Mammary epithelial cell (primary cell): ENCODE measurements at regions of chr3 and their contacts with region 1.

Region 1: GRCh38 chr3:55485211-55485791 is 1.8 kb downstream of the WNT5A start:
- DNase-seq: peak; percentile 62
- H3K4me3 ChIP-seq: peak overlapping the region; percentile 55 to 86 (median 80)
- H3K27ac ChIP-seq: peak overlapping the region; percentile 23
- H3K4me1 ChIP-seq: peaks cover 38% of the 10 kb centered on the region
- H3K27me3 ChIP-seq: no peaks in the 10 kb centered on the region
- CTCF ChIP-seq: peak; percentile 48 to 73

Region 2: DNA sequence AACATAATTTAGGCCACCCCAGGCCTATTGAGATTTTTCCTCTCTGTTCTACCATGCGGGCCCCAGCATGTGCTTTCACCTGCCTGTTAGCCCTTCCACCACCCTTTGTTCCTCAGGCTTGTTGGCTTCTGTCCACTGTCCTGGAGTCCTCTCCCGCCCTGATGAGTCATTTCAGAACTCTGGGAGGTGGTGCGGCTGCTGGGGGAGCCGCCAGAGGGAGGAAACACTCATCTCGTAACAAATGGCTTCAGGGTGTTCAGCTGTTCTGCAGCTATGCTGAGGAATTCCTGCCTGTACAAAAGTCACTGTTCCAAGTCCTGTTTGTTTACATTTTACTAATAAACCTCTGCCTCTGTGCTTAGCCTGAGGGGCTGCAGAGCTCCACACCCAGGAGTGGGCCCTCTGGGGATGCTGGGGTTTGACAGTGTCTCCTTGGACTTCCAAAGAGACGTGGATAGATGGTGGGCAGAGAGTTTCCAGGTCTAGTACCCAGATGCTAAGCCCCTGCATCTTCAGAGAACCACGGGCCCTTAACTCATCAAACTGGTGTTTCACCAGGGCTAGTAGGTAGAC is 593.7 kb before region 1 on chr3:
- CTCF ChIA-PET with region 1: no interaction called
- dilution Hi-C with region 1: no loop called
- in situ Hi-C with region 1: loop called in 1 of 2 experiments (anchors 25 kb)
- intact Hi-C with region 1: no loop called
- DNase-seq: peak; percentile 97
- H3K4me3 ChIP-seq: no peak overlapping the region
- H3K27ac ChIP-seq: peak overlapping the region; percentile 33
- H3K4me1 ChIP-seq: peaks cover 25% of the 10 kb centered on the region
- H3K27me3 ChIP-seq: no peaks in the 10 kb centered on the region
- CTCF ChIP-seq: peak; percentile 49 to 57

Region 3: GRCh38 chr3:55524565-55525244 is 39.4 kb after region 1 on chr3:
- CTCF ChIA-PET with region 1: no interaction called
- dilution Hi-C with region 1: no loop called
- in situ Hi-C with region 1: no loop called
- intact Hi-C with region 1: loop called (anchors 2 kb)
- DNase-seq: peak; percentile 80
- H3K4me3 ChIP-seq: no peak overlapping the region
- H3K27ac ChIP-seq: peak overlapping the region; percentile 1
- H3K4me1 ChIP-seq: peaks cover 29% of the 10 kb centered on the region
- H3K27me3 ChIP-seq: no peaks in the 10 kb centered on the region
- CTCF ChIP-seq: no peak

Region 4: GRCh38 chr3:55746808-55747413 is 261.6 kb after region 1 on chr3:
- CTCF ChIA-PET with region 1: no interaction called
- dilution Hi-C with region 1: loop called (anchors 25 kb)
- in situ Hi-C with region 1: no loop called
- intact Hi-C with region 1: no loop called
- DNase-seq: no peak
- H3K4me3 ChIP-seq: no peak overlapping the region
- H3K27ac ChIP-seq: no peak overlapping the region
- H3K4me1 ChIP-seq: peaks cover 11% of the 10 kb centered on the region
- H3K27me3 ChIP-seq: no peaks in the 10 kb centered on the region
- CTCF ChIP-seq: peak; percentile 35 to 50

Region 5: GRCh38 chr3:56042326-56042951 is 557.1 kb after region 1 on chr3:
- CTCF ChIA-PET with region 1: no interaction called
- dilution Hi-C with region 1: no loop called
- in situ Hi-C with region 1: no loop called
- intact Hi-C with region 1: loop called (anchors 2 kb)
- DNase-seq: peak; percentile 16
- H3K4me3 ChIP-seq: no peak overlapping the region
- H3K27ac ChIP-seq: no peak overlapping the region
- H3K4me1 ChIP-seq: no peaks in the 10 kb centered on the region
- H3K27me3 ChIP-seq: no peaks in the 10 kb centered on the region
- CTCF ChIP-seq: peak; percentile 54 to 70